GM13977 (cell line): ENCODE measurements at regions of chr17 and their contacts with region 1.

Region 1: GRCh38 chr17:1573916-1574696 is 11.5 kb upstream of the PITPNA start:
- DNase-seq: peak; percentile 93
- CTCF ChIP-seq: peak; percentile 91

Region 2: DNA sequence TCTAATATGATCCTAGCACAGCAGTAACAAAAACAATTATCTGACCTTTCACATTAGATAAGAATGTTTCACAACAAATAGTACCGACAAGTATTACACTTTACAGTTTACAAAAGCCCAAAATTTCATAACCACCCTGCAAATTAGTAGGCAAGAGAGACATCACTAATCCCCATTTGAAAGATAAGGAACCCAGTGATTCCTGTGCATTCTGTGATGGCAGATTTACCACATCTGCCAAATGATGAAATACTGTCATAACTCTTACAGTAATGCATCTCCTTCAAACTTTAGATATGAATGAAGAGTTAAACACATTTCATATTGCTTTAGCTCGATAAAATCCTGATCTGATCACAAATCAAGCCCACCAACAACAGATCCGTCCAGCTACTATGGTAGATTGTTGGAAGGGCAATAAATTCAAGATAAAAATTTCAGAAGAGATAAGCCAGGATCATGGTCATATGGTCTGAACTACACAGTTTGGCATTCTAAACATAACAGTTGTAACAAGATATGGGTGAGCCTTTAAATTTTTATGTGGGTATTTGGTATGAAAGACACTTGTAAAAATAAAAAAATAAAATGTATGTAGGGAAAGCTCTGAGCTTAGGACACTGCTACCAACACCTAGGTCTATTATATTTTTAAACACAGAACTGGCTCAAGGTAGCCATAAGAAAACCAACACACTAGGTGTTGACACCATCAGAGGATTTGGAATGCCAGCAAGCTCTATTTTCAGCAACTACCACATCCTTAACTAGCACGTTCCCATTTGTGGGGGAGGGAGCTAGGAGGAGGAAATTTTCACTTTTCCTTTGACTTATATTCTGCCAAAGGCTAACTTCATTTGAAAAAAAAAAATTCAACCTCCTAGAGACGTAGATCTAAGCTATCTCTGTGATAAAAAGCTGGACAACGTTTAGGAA is 183.4 kb before region 1 on chr17:
- in situ Hi-C with region 1: no loop called
- DNase-seq: no peak
- CTCF ChIP-seq: no peak

Region 3: DNA sequence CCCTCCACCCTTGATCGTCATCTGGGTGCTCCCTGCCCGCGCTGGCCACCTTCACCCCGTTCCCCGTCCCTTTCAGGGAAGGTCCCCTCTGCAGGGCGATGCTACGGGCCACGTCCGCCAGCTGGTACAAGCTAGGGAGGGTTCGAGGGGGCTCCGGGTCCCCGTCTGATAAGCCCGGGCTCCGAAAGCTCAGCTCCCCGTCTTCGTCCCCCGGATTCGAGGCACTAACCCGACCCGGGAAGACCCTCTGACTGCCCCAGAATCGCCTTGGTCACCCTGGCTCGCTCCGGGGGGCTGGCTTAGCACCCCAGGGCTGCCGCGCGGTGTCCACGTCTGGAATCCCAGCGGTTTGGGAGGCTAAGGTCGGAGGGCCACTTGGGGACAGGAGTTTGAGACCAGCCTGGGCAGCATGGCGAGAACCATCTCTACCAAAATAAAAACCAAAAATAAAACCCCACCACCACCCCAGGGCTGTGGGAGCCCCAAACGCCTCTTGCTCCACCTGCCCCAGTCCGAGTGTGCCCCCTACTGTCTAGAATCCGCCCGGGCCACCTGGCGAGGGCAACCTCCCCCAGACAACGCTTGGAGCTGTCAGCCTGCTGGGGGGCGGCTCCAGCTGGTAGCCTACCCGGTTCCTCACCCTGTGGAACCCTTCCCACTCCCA is 55.7 kb after region 1 on chr17:
- in situ Hi-C with region 1: loop called (anchors 10 kb)
- DNase-seq: peak; percentile 83
- CTCF ChIP-seq: peak; percentile 88

Region 4: DNA sequence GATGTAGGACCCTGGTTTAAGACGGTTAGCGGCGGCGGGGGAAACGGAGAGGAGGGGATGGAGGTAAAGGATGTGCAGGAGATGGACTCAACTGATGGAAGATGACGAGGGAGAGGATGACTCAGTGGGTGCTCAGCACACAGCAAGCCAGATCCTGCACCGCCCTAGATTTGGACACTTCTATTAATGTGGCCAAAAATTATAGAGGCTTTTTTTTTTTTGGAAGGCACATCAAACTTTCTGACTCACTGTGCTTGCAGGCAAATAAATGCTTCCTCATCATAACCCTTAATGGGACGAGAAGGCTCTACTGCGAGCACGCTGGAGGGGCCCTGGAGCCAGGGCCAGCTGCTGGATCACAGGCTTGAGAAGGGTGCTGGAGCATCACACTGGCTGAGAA is 415.0 kb after region 1 on chr17:
- in situ Hi-C with region 1: no loop called
- DNase-seq: no peak
- CTCF ChIP-seq: no peak